Naive thymus-derived CD8-positive, alpha-beta T cell (primary cell): ENCODE measurements at regions of chr2 and their contacts with region 1.

Region 1: DNA sequence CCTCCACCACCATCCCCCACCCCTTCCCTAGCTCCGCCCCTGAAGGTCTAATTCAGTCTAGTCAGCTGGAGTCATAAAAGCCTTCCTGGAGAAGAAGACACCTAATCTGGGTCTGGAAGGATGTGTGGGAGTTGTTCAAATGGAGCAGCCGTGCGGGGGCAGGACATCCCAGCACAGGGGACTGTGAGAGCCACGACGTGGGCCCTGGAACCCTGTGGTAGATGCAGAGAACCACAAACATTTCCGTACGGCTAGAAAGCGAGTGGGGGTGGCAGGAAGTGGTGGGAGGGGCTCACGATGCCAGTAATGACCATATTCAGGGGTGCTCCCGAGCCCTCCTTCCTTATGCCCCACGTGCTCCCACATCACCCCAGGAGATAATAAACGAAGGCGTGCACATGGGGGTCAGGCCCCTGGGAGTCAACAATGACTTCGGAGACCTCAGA is 20.9 kb upstream of the COL6A3 start:
- DNase-seq: peak; percentile 36 to 88 (median 74)
- ATAC-seq: peak; percentile 69 to 83
- H3K4me3 Mint-ChIP-seq: peak overlapping the region; percentile 76 to 92 (median 88)
- H3K27ac Mint-ChIP-seq: peak overlapping the region; percentile 89 to 100 (median 97)
- H3K4me1 Mint-ChIP-seq: peaks cover 45 to 88% (median 85%) of the 10 kb centered on the region in 4 donors
- H3K27me3 Mint-ChIP-seq: no peaks in the 10 kb centered on the region

Region 2: DNA sequence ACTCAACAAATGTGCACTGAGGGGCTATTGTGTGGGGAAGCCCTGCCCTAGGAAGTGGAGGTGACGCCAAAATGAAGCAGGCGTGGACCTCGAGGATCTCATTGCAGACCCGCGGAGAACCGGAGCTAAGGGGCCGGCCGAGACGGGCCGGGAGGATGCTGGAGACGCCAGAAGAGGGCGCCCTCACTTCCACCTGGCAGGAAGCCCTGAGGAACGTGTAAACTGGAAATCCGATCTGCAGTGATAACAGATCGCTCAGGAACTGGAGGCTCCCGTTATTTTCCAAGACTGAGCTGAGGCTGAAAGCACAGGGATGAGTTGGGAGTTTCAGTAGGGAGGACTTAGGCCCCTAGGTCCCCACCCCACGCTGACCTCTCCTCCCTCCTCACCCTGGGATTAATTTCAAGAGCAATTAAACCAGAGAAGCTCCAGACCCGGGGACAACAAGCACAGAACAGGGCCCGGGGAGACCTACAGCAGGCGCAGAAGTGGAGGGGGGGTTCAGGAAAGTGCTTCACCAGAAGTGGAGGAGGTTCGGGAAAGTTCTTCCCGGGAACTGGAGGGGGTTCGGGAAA is 13.3 kb before region 1 on chr2:
- POLR2A ChIA-PET with region 1: interaction called, 65 read pairs
- DNase-seq: peak; percentile 59 to 87 (median 76)
- ATAC-seq: peak; percentile 89 to 99
- H3K4me3 Mint-ChIP-seq: peak overlapping the region; percentile 38 to 81 (median 74)
- H3K27ac Mint-ChIP-seq: peak overlapping the region; percentile 57 to 91 (median 86)
- H3K4me1 Mint-ChIP-seq: peaks cover 13 to 43% (median 30%) of the 10 kb centered on the region in 4 donors
- H3K27me3 Mint-ChIP-seq: peaks cover 0 to 2% (median 0%) of the 10 kb centered on the region in 5 donors